ENCODE measurements at regions of chr2 and their contacts with region 1.

Region 1: DNA sequence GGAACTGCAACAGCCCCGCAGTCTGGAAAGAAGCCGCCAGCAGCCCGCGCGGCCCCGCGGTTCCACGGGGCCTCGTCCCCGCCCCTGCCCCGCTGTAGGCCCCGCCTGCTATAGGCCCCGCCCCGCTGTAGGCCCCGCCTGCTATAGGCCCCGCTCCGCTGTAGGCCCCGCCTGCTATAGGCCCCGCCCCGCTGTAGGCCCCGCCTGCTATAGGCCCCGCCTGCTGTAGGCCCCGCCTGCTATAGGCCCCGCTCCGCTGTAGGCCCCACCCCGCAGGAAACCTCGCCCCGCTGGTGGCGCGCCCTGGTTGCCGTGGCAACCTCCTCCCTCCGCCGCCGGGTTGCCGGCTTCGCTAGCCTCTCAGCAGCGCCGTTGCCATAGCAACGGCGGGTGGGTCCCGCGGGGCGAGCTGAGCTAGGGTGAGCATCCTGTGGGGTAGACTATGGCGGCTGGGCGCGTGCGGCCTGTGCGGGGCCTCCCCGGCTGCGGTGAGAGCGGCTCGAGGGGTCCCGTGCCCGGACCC is 12.2 kb upstream of the KIF1A start:
- DNase-seq: peak; percentile 94

Region 2: DNA sequence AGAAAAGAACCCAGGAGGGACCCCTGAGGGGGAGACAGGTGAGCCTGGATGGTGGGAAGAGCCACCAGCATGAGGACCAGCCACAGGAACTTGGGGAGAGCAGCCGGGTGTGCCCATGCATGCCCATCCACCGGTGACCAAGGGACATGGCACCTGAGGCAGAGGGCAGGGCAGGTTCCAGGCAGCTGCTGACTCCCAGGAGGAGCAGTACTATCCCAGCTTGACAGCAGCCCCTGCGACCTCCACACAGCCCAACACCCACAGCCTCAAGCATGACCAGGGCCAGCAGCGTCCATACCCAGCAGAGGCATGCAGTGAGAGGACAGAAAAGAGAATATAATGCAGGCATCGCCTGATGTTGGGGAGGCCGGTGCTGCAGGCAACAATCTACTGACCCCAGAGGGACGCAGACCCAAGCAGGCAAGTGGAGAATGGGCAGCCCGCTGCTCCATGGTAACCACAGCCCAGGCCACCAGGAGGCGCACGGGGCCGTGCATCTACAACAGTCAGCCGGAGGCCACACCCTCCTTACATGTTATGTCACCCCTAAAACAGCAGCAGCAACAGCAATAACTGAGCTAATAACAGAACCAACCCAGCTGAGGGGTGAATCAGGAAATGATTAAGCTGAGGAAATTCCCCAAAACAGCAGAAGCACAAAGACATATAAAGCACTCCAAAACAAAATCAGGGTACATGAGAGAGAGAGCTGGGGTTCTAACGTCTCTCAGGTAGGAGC is 318.5 kb before region 1 on chr2:
- intact Hi-C with region 1: loop called (anchors 10 kb)
- DNase-seq: peak; percentile 92

Region 3: GRCh38 chr2:240604291-240604938 is 227.9 kb before region 1 on chr2:
- intact Hi-C with region 1: loop called (anchors 10 kb)
- DNase-seq: peak; percentile 85

Measured in cardiac septum (tissue), 1 donor.